ENCODE measurements at regions of chr1 and their contacts with region 1.

Region 1: DNA sequence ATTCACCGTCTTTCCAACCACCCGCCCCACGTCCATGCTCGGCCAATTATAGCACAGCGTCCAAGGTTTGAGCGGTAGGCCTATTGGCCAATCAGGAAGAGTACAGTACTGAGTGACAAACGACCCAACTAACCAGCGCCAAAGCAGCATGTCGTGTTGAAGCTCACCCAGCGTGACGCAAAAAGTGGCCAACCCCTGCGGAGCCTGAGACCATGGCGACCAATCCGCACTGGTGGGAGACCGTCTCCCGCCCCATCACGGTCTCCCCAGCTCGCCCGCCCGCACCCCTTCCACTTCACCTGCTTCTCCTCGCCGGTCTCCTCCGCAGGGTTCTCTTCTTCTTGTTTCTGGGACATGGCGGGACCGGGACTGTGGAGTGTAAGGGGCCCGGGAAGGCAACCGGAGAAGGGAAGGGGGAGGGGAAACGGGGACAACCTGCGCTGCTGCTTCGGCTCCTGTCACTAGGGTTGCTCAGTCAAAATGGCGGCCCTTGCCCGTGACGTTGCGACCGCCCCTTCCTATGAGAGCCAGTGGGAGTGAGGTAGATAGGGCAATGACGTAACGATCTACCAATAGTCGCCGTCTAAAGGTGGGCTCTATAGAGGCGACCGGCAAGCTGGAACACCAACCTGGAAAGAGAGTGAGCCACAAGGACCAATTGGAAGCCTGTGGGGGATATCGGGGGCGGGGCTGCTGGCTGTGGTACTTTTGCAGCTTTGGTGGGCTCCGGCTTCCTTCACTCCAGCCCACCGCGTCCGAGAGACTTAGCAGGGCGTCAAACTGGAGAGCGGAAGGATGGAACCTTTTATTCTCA is at the start of gene ENSA:
- DNase-seq: peak; percentile 89 to 99 (median 94)
- ATAC-seq: peak; percentile 94
- H3K4me3 ChIP-seq: peak within 1 kb of the TSS; percentile 59
- H3K27ac ChIP-seq: peak within 1 kb of the TSS; percentile 92
- H3K4me1 ChIP-seq: peaks cover 14 to 24% of the 10 kb centered on the region in 2 experiments; a peak in 4 of 5 replicates
- H3K27me3 ChIP-seq: no peaks in the 10 kb centered on the region
- CTCF ChIP-seq: no peak
- EP300 ChIP-seq: peak; percentile 3; the same call in 1 of the 2 replicates
- POLR2A ChIP-seq: peak; percentile 97
- RAD21 ChIP-seq: no peak
- polyA plus RNA-seq, gene ENSA: 68.1 to 93.9 TPM

Region 2: DNA sequence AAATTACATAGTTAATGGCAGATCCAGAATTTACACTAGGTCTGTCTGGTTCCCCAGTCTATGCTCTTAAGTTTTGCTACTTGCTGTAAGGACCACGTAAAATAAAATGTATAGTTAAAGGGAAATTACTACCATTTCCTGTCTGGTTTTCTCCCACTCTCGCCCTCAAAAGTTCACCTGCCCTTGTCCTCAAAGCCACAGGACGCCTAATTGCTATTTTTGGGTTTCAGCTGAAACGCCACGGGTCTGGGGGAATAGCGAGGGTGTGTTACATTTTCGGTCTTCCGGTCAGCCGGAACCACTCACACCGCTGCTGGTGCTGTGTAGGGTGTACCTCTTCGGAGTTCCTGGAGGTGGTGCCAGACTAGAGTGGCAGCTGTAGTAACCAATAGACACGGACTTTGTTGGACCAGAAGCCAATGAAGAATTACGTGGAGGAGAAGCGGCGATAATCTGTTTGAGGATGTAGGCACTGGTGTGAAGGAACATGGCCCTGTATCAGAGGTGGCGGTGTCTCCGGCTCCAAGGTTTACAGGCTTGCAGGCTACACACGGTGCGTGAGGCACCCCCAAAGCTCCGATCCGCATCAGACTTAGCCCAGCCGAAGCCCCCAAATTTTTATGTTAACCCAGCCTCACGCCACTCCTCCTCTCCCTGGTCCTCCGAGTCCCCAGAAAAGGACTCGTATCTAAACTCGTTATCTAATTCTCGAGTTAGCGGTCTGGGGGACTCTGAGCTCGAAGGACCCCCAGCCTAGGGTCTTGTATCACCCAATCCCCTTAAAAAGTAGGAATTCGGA is 142.2 kb before region 1 on chr1 and contains the start of gene TARS2:
- CTCF ChIA-PET with region 1: no interaction called
- POLR2A ChIA-PET with region 1: no interaction called
- in situ Hi-C with region 1: no loop called
- intact Hi-C with region 1: loop called (anchors 10 kb)
- DNase-seq: peak; percentile 97 to 98 (median 98)
- ATAC-seq: peak; percentile 100
- H3K4me3 ChIP-seq: peak within 1 kb of the TSS; percentile 74
- H3K27ac ChIP-seq: peak within 1 kb of the TSS; percentile 93
- H3K4me1 ChIP-seq: peaks cover 3 to 10% of the 10 kb centered on the region in 2 experiments; a peak in 3 of 5 replicates
- H3K27me3 ChIP-seq: no peaks in the 10 kb centered on the region
- CTCF ChIP-seq: no peak; a peak in 1 of 6 replicates
- EP300 ChIP-seq: peak; percentile 61
- POLR2A ChIP-seq: peak; percentile 95
- RAD21 ChIP-seq: peak in 1 of 2 experiments; percentile 32; a peak in 1 of 4 replicates
- polyA plus RNA-seq, gene TARS2: 17.0 to 30.1 TPM

Region 3: GRCh38 chr1:150515328-150516048 is 113.8 kb before region 1 on chr1 and contains the start of gene FALEC:
- CTCF ChIA-PET with region 1: no interaction called
- POLR2A ChIA-PET with region 1: no interaction called
- in situ Hi-C with region 1: no loop called
- intact Hi-C with region 1: no loop called
- DNase-seq: peak; percentile 97 to 99 (median 98)
- ATAC-seq: peak; percentile 97
- H3K4me3 ChIP-seq: peak within 1 kb of the TSS; percentile 43
- H3K27ac ChIP-seq: peak within 1 kb of the TSS; percentile 83
- H3K4me1 ChIP-seq: peaks cover 28 to 42% of the 10 kb centered on the region in 2 experiments; a peak in 4 of 5 replicates
- H3K27me3 ChIP-seq: no peaks in the 10 kb centered on the region
- CTCF ChIP-seq: no peak
- EP300 ChIP-seq: no peak
- POLR2A ChIP-seq: peak; percentile 72
- RAD21 ChIP-seq: no peak
- polyA plus RNA-seq, gene FALEC: not detected

Region 4: DNA sequence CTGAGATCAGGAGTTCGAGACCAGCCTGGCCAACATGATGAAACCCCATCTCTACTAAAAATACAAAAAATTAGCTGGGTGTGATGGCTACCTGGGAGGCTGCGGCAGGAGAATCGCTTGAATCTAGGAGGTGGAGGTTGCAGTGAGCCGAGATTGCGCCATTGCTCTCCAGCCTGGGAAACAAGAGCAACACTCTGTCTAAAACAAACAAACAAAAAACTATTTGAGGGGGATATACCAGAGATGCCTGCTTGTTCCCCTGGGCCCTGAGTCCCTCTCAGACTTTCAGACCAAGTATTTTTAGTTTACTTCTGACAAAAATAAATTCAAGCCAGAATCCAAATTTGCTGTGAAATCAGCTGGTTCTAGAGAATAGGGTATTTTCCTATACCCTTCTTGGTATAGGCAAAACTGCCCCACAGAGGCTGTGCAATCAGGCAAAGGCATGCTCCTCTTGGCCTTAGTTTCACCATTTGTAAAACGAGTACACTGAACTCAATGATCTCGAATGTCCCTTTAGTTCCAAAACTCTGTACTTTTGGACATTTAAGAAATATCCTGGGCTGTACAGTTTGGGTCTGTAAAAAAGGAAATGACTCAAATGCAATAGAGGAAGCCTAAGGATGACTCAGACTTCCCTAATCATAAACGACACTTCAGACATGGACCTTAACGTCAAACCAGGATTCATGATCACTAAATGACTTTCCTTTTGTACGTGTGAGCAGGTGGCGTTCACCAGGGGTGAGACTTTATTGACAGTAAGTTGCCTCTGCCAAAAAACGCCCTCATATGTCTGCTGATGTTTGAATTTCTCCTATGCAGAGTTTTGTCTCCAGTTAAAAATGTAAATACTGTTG is 16.0 kb before region 1 on chr1:
- CTCF ChIA-PET with region 1: no interaction called
- POLR2A ChIA-PET with region 1: interaction called, 32 read pairs
- in situ Hi-C with region 1: no loop called
- intact Hi-C with region 1: no loop called
- DNase-seq: peak; percentile 26 to 87 (median 49)
- ATAC-seq: peak; percentile 79
- H3K4me3 ChIP-seq: no peak overlapping the region
- H3K27ac ChIP-seq: peak overlapping the region; percentile 94
- H3K4me1 ChIP-seq: peaks cover 26 to 44% of the 10 kb centered on the region in 2 experiments
- H3K27me3 ChIP-seq: no peaks in the 10 kb centered on the region
- CTCF ChIP-seq: no peak
- EP300 ChIP-seq: peak; percentile 92
- POLR2A ChIP-seq: no peak
- RAD21 ChIP-seq: peak in 1 of 2 experiments; percentile 7; a peak in 1 of 4 replicates

Region 5: GRCh38 chr1:150662811-150663210 is 33.5 kb after region 1 on chr1:
- CTCF ChIA-PET with region 1: no interaction called
- POLR2A ChIA-PET with region 1: no interaction called
- in situ Hi-C with region 1: no loop called
- intact Hi-C with region 1: no loop called
- DNase-seq: no peak
- ATAC-seq: no peak
- H3K4me3 ChIP-seq: no peak overlapping the region
- H3K27ac ChIP-seq: no peak overlapping the region
- H3K4me1 ChIP-seq: no peaks in the 10 kb centered on the region
- H3K27me3 ChIP-seq: no peaks in the 10 kb centered on the region
- CTCF ChIP-seq: no peak
- EP300 ChIP-seq: no peak
- POLR2A ChIP-seq: no peak
- RAD21 ChIP-seq: no peak

Region 6: DNA sequence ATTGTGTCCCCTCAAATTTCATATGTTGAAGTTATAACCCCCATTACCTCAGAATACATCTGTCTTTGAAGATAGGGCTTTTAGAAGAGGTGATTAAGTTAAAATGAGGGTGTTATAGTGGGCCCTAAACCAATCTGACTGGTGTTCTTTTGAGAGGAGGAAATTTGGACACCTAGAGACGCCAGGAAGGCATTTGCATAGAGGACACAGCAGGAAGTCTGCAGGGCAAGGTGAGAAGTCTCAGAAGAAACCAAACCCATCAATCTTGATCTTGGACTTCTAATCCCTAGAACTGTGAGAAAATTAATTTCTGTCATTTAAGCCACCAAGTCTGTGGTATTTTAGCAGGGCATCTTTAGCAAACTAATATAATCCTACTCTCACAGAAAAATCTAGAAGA is 54.6 kb after region 1 on chr1:
- CTCF ChIA-PET with region 1: no interaction called
- POLR2A ChIA-PET with region 1: no interaction called
- in situ Hi-C with region 1: no loop called
- intact Hi-C with region 1: no loop called
- DNase-seq: no peak
- ATAC-seq: no peak
- H3K4me3 ChIP-seq: no peak overlapping the region
- H3K27ac ChIP-seq: no peak overlapping the region
- H3K4me1 ChIP-seq: no peaks in the 10 kb centered on the region
- H3K27me3 ChIP-seq: no peaks in the 10 kb centered on the region
- CTCF ChIP-seq: no peak
- EP300 ChIP-seq: no peak
- POLR2A ChIP-seq: no peak
- RAD21 ChIP-seq: no peak

Region 7: DNA sequence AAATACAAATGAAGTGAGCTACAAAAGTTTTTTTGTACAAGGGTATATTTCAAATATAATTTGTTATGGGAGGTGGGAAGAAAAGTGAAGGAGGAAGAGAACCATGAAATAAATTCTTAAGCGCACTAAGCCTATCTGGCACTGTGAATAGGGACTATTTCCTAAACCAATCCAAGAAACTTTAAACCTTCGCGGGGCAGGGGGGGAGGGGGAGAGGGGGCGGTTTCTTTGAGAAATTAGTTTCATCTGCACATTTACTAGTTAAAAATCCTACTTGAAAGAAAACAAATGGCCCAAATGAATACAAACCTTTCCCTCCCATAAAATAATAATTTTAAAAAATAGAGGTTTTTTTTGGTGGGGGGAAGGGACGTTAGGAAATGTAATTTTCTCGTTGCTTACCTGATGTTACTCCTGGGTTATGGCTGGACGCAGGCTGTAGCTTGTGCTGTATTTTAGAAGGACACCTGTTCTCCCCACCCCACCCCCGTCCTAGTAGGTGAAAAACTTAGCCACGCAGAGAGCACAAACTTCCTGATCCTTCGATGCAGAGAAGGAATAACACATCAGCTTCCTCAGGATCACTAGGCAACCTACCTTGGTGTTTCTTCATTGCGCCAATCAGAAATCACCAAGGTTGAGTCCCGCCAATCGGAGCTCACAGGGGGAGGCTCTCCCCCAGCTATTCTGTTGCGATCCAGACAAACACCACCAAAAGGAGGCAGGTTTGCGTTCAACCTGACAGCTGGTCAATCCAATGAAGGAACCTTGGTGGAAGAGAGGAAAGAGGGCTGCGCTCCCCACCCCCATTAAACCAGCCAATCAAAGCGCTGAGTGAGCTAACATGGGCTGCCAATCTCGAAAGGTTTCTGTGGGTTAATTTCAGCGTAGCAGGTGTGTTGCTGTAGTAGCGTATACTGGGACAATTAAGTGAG is 67.5 kb after region 1 on chr1 and contains the start of gene GOLPH3L:
- CTCF ChIA-PET with region 1: no interaction called
- POLR2A ChIA-PET with region 1: interaction called, 3 read pairs
- in situ Hi-C with region 1: no loop called
- intact Hi-C with region 1: loop called (anchors 2 kb)
- DNase-seq: peak; percentile 95 to 99 (median 97)
- ATAC-seq: peak; percentile 99
- H3K4me3 ChIP-seq: peak within 1 kb of the TSS; percentile 55
- H3K27ac ChIP-seq: peak within 1 kb of the TSS; percentile 65
- H3K4me1 ChIP-seq: no peaks in the 10 kb centered on the region; a peak in 1 of 5 replicates
- H3K27me3 ChIP-seq: no peaks in the 10 kb centered on the region
- CTCF ChIP-seq: peak in 1 of 3 experiments; percentile 1; a peak in 1 of 6 replicates
- EP300 ChIP-seq: no peak
- POLR2A ChIP-seq: peak; percentile 76
- RAD21 ChIP-seq: no peak
- polyA plus RNA-seq, gene GOLPH3L: 16.8 to 21.9 TPM

Region 8: GRCh38 chr1:150925816-150926741 is 296.8 kb after region 1 on chr1 and contains the start of gene SETDB1:
- CTCF ChIA-PET with region 1: no interaction called
- POLR2A ChIA-PET with region 1: interaction called, 3 read pairs
- in situ Hi-C with region 1: no loop called
- intact Hi-C with region 1: loop called (anchors 10 kb)
- DNase-seq: peak; percentile 91 to 98 (median 94)
- ATAC-seq: peak; percentile 97
- H3K4me3 ChIP-seq: peak within 1 kb of the TSS; percentile 70
- H3K27ac ChIP-seq: peak within 1 kb of the TSS; percentile 90
- H3K4me1 ChIP-seq: peaks cover 3 to 9% of the 10 kb centered on the region in 2 experiments; a peak in 2 of 5 replicates
- H3K27me3 ChIP-seq: no peaks in the 10 kb centered on the region
- CTCF ChIP-seq: peak; percentile 23 to 42 (median 25); a peak in 3 of 6 replicates
- EP300 ChIP-seq: peak; percentile 67
- POLR2A ChIP-seq: peak; percentile 85
- RAD21 ChIP-seq: peak in 1 of 2 experiments; percentile 16; a peak in 1 of 4 replicates
- polyA plus RNA-seq, gene SETDB1: 21.5 to 21.8 TPM

Measured in K562 (cell line).